ENCODE measurements at regions of chr19 and their contacts with region 1.

Region 1: DNA sequence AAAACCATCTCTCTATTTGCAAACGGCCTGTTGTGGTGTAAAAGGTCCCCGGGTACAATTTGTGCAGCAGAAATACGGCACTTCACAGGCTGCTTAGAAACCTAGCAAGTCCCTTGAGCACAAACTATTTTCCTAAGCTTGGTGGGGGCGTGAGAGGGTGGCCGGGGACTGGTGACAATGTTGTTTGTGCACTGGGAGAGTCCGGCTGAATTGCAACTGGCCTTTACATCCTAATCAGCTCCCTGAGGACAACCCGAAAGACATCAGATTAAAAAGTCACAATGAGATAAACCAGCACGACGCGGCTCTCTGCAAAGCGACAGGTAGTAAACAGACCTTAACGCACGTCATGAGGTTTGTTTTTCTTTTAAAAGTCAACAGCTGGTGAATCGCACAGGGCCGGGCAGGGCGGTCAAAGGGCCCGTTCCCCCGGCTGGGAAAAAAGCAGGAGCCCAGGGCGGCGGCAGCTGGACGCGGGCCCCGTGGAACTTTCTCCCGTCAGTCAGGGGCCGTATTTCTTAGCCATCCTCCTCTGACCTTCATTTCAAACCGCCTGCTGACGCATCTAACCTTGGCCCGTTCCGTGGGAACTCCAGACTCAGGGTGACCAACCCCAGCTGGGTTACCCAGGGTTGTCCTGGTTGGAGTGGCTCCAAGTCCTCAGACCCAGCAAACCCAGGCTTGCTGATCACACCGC is 112.3 kb downstream of the GADD45B start:
- DNase-seq: no peak
- H3K4me3 ChIP-seq: no peak overlapping the region
- H3K27ac ChIP-seq: no peak overlapping the region
- H3K4me1 ChIP-seq: no peaks in the 10 kb centered on the region
- H3K27me3 ChIP-seq: no peaks in the 10 kb centered on the region

Region 2: GRCh38 chr19:2600914-2601870 is 13.0 kb after region 1 on chr19:
- CTCF ChIA-PET with region 1: interaction called, 12 read pairs
- POLR2A ChIA-PET with region 1: no interaction called
- DNase-seq: no peak
- H3K4me3 ChIP-seq: no peak overlapping the region
- H3K27ac ChIP-seq: no peak overlapping the region
- H3K4me1 ChIP-seq: peaks cover 0 to 11% (median 6%) of the 10 kb centered on the region in 4 experiments
- H3K27me3 ChIP-seq: no peaks in the 10 kb centered on the region

Region 3: GRCh38 chr19:2711172-2711874 is 123.1 kb after region 1 on chr19:
- CTCF ChIA-PET with region 1: no interaction called
- POLR2A ChIA-PET with region 1: no interaction called
- DNase-seq: no peak
- H3K4me3 ChIP-seq: no peak overlapping the region
- H3K27ac ChIP-seq: no peak overlapping the region
- H3K4me1 ChIP-seq: peaks cover 0 to 19% (median 17%) of the 10 kb centered on the region in 4 experiments
- H3K27me3 ChIP-seq: no peaks in the 10 kb centered on the region

Measured in common myeloid progenitor, CD34-positive (primary cell).